Activated CD4-positive, alpha-beta T cell treated with anti-CD3 and anti-CD28 coated beads, Interleukin-2, amount 10 ng/mL, durations not matched to agents 24 days and 14 days (primary cell): ENCODE measurements at regions of chr4 and their contacts with region 1.

Region 1: DNA sequence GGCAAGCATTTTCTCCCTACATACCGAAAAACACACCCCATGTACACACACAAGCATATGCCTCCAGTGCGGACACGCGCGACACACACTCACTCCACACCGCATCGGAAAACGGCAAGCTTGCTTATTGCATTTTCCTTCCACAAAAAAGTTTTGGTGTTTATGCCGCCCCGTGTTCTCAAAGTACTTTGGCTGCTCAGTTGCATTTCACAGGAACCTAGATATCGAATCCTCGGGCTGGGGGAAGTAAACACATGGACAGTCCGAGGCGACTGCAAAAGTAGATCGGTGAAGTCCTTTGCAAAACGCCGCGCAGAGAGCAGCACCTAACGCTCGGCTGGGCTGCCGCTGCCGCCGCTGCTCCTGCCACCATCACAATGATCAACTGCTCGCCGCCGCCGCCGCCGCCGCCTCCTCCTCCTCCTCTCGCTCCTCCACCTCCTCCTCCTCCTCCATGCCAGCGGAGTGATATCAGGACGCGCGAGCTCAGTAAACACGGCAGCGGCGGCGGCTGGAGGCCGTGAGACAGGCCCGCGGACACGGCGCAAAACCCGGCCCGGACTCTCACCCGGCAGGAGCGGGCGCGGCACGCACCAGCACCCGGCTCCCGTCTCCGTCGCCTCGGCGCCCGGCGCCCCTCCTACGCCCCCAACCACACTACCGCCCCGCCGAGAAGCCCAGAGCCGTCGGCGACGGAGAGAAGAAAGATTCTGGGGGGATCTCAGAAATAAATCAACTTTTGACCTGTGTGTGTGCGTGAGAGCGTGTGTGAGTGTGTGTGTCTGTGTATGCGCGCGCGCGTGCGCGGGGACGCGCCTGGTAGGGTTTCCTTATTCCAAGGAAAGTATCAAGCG is at the start of gene MAML3:
- DNase-seq: peak; percentile 94
- H3K4me3 Mint-ChIP-seq: peak within 1 kb of the TSS; percentile 92
- H3K27ac Mint-ChIP-seq: peak within 1 kb of the TSS; percentile 81
- H3K4me1 Mint-ChIP-seq: peaks cover 34% of the 10 kb centered on the region
- H3K27me3 Mint-ChIP-seq: peaks cover 60% of the 10 kb centered on the region
- total RNA-seq, gene MAML3: 0.52 and 0.54 TPM in 2 replicates

Region 2: GRCh38 chr4:139554893-139555704 is 598.8 kb before region 1 on chr4:
- intact Hi-C with region 1: loop called (anchors 2 kb)
- DNase-seq: peak; percentile 95
- H3K4me3 Mint-ChIP-seq: peak overlapping the region; percentile 89
- H3K27ac Mint-ChIP-seq: peak overlapping the region; percentile 97
- H3K4me1 Mint-ChIP-seq: peaks cover 38% of the 10 kb centered on the region
- H3K27me3 Mint-ChIP-seq: peaks cover 7% of the 10 kb centered on the region

Region 3: GRCh38 chr4:139858436-139859225 is 295.3 kb before region 1 on chr4:
- intact Hi-C with region 1: loop called (anchors 2 kb)
- DNase-seq: no peak
- H3K4me3 Mint-ChIP-seq: no peak overlapping the region
- H3K27ac Mint-ChIP-seq: peak overlapping the region; percentile 1
- H3K4me1 Mint-ChIP-seq: peaks cover 17% of the 10 kb centered on the region
- H3K27me3 Mint-ChIP-seq: peaks cover 24% of the 10 kb centered on the region

Region 4: DNA sequence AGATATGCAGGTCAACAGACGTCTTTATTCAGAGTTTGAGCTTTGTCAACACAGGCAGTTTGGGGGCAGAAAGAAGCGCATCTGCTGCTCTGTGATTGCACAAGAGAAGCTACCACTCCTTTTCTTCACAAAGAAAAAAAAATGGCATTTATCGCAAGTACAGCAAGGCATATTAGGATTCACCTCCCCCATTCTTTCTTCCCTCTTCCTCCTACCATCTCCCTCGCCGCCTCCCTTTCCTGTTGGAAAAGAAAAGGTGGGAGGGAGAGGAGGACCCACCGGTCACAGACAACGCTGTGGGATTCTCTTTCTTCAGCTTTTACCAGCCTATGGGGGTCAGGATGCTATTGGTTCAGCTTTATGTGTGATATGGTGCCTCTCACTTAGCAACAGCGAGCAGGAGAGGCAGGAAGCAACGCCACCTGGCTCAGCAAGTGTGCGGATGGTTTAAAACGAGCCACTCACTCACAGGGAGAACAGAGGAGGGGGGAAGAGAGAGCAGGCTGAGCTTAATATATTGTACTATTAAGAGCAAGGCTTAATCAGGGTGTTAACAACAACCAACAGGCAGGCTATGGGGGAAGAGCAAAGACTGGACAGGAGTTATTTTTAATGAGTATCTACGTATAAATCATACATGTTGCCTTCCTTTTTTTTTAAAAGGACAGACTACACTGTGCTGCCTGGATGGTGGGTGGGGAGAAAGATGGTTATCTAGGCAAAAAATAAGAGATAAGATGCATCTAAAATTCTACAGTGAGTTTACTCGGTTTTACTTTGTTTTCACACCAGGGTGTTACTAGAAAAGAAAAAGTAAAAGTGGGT is 104.7 kb before region 1 on chr4:
- intact Hi-C with region 1: loop called (anchors 2 kb)
- DNase-seq: peak; percentile 81
- H3K4me3 Mint-ChIP-seq: peak overlapping the region; percentile 67
- H3K27ac Mint-ChIP-seq: peak overlapping the region; percentile 56
- H3K4me1 Mint-ChIP-seq: peaks cover 28% of the 10 kb centered on the region
- H3K27me3 Mint-ChIP-seq: peaks cover 55% of the 10 kb centered on the region

Region 5: DNA sequence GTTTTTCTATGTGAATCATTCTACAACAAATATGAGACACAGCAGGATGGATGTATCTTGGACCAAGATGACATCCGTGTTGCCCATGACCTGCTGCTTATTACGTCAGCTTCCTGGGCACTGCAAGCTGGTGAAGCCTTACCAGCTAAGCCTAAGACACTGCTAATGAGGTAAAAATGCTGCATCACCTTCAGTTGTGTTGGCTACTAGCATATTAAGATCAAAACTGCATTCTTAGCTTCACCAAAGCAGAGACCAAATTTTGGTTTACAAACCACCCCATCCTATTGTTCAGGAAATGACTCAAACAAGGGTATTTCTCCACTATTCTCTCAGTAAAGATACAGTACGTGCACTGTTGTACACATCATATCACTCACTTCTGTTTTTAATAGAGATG is 50.3 kb before region 1 on chr4:
- intact Hi-C with region 1: loop called (anchors 1 kb)
- DNase-seq: peak; percentile 83
- H3K4me3 Mint-ChIP-seq: peak overlapping the region; percentile 37
- H3K27ac Mint-ChIP-seq: peak overlapping the region; percentile 79
- H3K4me1 Mint-ChIP-seq: peaks cover 51% of the 10 kb centered on the region
- H3K27me3 Mint-ChIP-seq: peaks cover 17% of the 10 kb centered on the region

Region 6: GRCh38 chr4:140168474-140168873 is 14.5 kb after region 1 on chr4:
- intact Hi-C with region 1: no loop called
- DNase-seq: no peak
- H3K4me3 Mint-ChIP-seq: no peak overlapping the region
- H3K27ac Mint-ChIP-seq: no peak overlapping the region
- H3K4me1 Mint-ChIP-seq: no peaks in the 10 kb centered on the region
- H3K27me3 Mint-ChIP-seq: peaks cover 41% of the 10 kb centered on the region

Region 7: GRCh38 chr4:140233791-140234696 is 80.1 kb after region 1 on chr4:
- intact Hi-C with region 1: loop called (anchors 2 kb)
- DNase-seq: peak; percentile 66
- H3K4me3 Mint-ChIP-seq: peak overlapping the region; percentile 77
- H3K27ac Mint-ChIP-seq: peak overlapping the region; percentile 95
- H3K4me1 Mint-ChIP-seq: peaks cover 28% of the 10 kb centered on the region
- H3K27me3 Mint-ChIP-seq: peaks cover 4% of the 10 kb centered on the region

Region 8: GRCh38 chr4:140720387-140721304 is 566.7 kb after region 1 on chr4:
- intact Hi-C with region 1: no loop called
- DNase-seq: peak; percentile 57
- H3K4me3 Mint-ChIP-seq: peak overlapping the region; percentile 67
- H3K27ac Mint-ChIP-seq: no peak overlapping the region
- H3K4me1 Mint-ChIP-seq: peaks cover 5% of the 10 kb centered on the region
- H3K27me3 Mint-ChIP-seq: peaks cover 1% of the 10 kb centered on the region